BJ (cell line): ENCODE measurements at regions of chr15 and their contacts with region 1.

Region 1: GRCh38 chr15:62187910-62188309 is 22.8 kb upstream of the C2CD4B start:
- DNase-seq: no peak
- H3K4me3 ChIP-seq: no peak overlapping the region
- H3K27me3 ChIP-seq: peaks cover 3% of the 10 kb centered on the region; the same call in 1 of the 2 replicates
- CTCF ChIP-seq: no peak

Region 2: DNA sequence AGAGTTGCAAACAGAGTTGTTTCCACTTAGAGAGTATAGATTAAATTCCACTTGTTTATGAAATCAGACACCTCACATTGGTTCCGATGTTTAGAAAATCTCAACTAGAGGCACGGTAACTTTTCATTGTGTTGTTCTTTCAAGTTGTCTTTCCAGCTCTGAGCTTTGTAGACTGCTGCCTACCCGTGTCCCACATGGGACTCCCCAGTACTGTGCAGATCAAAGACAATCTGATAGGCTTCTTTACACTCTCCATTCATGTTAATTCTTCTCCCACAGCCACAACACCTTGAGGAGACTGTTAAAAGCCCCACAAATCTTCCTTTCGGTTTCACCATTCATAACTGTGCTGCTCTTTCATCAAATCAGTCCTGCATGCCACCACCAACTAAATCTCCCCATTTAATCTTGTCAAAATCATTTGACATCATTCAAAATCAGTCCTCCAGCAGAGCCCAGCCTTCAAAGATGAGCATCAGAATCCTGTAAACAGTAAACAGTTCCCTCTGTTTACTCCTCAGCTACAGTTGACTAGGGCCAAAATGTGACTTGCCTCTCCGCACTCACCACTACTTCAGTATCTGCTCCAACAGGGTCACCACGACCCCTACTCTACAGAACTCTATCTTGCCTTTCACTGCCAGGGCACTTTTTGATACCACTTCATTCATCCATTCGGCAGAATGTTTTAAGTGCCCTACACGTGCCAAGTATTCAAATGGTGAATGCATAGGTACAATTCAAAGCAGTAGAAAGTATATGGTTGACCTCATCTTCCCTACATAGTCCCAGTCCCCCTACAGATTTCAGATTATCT is 1798.4 kb before region 1 on chr15:
- CTCF ChIA-PET with region 1: no interaction called
- POLR2A ChIA-PET with region 1: interaction called, 14 read pairs
- DNase-seq: no peak
- H3K4me3 ChIP-seq: peak overlapping the region; percentile 30
- H3K27me3 ChIP-seq: no peaks in the 10 kb centered on the region
- CTCF ChIP-seq: no peak